Psoas muscle (tissue), 8 donors: ENCODE measurements at regions of chr1 and their contacts with region 1.

Region 1: DNA sequence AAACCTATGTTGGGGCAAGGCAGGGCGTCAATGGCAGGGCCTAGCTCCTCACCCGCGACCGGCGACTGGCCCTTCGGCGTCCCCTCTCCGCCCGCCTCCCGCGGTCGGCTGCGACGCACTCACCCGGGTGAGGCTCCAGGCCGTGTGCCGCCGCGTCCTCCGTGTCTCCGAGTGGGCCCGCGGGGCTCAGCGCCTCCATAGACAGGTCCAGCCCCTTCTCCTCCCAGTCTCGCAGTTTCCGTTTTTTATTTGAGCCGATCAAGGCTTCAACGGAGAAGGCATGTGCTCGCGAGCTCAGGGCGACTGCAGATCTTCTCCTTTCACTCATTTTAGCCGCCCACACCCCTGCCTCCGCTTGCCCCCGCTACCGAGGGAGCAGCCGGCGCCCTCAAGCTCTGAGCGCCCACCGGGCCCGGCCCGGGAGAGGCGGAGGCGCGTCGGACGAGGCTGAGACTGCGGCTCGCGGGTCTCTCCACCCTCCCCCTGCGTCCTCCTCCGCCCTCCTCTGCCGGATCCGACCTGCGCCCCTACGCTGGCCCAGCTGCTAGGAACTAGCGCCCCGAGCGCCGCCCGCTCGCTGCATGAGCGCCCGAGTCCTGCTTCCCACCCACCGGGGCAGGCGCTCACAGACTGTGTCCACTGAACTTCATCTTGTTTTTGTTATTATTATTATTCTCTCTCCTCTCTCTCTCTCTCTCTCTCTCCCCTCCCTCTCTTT is 516 bp downstream of the TBX15 start:
- DNase-seq: peak; percentile 58 to 85
- ATAC-seq: peak; percentile 61 to 72 (median 66)
- H3K4me3 ChIP-seq: peak overlapping the region; percentile 71
- H3K27ac ChIP-seq: peak overlapping the region; percentile 88
- H3K4me1 ChIP-seq: peaks cover 16% of the 10 kb centered on the region
- H3K27me3 ChIP-seq: no peaks in the 10 kb centered on the region
- CTCF ChIP-seq: no peak

Region 2: DNA sequence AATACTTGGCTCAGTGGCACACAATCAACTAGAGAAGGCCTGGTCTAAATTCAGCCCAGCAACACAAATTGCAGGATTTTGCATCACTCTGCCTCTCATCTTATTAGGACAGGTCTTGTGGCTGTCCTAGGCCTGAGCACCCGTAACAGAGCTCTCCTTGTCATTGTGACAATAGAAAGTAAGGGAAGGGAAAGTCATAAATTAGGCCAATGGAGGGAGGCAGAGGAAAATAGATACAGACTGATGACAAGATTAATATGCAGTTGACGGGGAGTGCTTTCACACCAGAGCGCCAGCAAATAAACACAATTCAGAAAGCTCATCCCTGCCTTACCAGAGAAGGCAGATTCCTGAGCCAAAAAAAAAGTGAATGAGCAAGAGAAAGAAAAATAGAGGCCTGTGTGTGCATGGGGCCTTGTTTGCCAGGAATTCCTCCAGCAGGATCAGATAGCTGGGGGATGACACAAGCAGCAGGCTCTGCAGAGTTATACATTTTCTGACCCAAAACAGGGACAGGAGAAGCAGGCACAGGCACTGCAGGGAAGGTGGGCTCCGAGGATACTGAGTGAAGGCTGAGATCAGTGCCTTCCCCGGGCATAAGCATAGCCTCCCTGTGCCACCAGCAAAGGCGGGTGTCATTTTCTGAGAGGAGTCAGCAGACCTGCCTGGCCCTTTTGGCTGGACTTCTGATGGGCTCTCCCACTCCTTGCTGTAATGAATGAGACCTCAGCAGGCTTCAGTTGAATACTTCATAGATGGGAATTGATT is 692.6 kb before region 1 on chr1:
- intact Hi-C with region 1: loop called (anchors 5 to 10 kb)
- DNase-seq: peak in 1 of 2 donors; percentile 53
- ATAC-seq: peak; percentile 23 to 46 (median 34)
- H3K4me3 ChIP-seq: no peak overlapping the region
- H3K27ac ChIP-seq: peak overlapping the region; percentile 88
- H3K4me1 ChIP-seq: peaks cover 82% of the 10 kb centered on the region
- H3K27me3 ChIP-seq: no peaks in the 10 kb centered on the region
- CTCF ChIP-seq: no peak

Region 3: GRCh38 chr1:118931876-118932275 is 55.8 kb before region 1 on chr1:
- intact Hi-C with region 1: no loop called
- DNase-seq: no peak
- ATAC-seq: no peak
- H3K4me3 ChIP-seq: no peak overlapping the region
- H3K27ac ChIP-seq: no peak overlapping the region
- H3K4me1 ChIP-seq: peaks cover 34% of the 10 kb centered on the region
- H3K27me3 ChIP-seq: peaks cover 0 to 1% (median 0%) of the 10 kb centered on the region in 3 donors
- CTCF ChIP-seq: no peak

Region 4: GRCh38 chr1:118944133-118944532 is 43.5 kb before region 1 on chr1:
- intact Hi-C with region 1: loop called (anchors 2 to 5 kb)
- DNase-seq: no peak
- ATAC-seq: peak in 1 of 4 donors; percentile 55
- H3K4me3 ChIP-seq: peak overlapping the region; percentile 6
- H3K27ac ChIP-seq: peak overlapping the region; percentile 81
- H3K4me1 ChIP-seq: peaks cover 84% of the 10 kb centered on the region
- H3K27me3 ChIP-seq: no peaks in the 10 kb centered on the region
- CTCF ChIP-seq: no peak

Region 5: DNA sequence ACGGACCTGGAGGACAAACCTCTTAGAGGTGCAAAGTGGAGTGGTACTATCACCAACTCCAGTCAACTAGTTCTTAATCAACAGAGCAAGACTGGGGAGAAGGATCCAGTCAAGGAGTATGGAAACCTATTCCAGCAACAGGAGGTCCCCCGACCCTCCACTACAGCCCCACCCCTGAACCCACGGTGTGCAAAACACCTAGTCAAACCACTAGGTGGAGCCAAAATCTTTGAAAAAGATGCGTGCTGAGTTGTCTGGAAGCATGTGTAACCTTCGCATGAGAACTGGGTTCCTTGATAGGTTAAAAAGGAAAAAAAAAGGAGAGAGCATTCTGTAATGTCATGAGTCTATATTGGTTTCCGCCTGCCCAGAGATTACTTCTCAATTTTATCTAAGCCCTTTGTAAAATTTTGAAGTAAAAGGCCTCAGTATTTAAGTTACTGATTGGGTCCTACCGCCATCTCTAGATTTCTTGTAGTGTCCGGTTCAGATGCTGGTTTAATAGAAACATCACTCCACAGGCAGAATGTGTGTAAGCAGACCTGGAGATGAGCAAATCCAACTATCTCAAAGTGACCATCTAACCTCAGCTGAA is 299.1 kb after region 1 on chr1:
- intact Hi-C with region 1: no loop called
- DNase-seq: no peak
- ATAC-seq: peak in 1 of 4 donors; percentile 46
- H3K4me3 ChIP-seq: no peak overlapping the region
- H3K27ac ChIP-seq: no peak overlapping the region
- H3K4me1 ChIP-seq: no peaks in the 10 kb centered on the region
- H3K27me3 ChIP-seq: no peaks in the 10 kb centered on the region
- CTCF ChIP-seq: peak; percentile 27